ENCODE measurements at regions of chr21 and their contacts with region 1.

Region 1: GRCh38 chr21:29849735-29850176 is 90.0 kb downstream of the GRIK1 start:
- DNase-seq: peak; percentile 64
- ATAC-seq: peak; percentile 99
- H3K4me3 ChIP-seq: no peak overlapping the region
- H3K27ac ChIP-seq: no peak overlapping the region
- H3K4me1 ChIP-seq: no peaks in the 10 kb centered on the region
- H3K27me3 ChIP-seq: peaks cover 9% of the 10 kb centered on the region; the same call in 1 of the 2 replicates
- CTCF ChIP-seq: peak; percentile 88

Region 2: DNA sequence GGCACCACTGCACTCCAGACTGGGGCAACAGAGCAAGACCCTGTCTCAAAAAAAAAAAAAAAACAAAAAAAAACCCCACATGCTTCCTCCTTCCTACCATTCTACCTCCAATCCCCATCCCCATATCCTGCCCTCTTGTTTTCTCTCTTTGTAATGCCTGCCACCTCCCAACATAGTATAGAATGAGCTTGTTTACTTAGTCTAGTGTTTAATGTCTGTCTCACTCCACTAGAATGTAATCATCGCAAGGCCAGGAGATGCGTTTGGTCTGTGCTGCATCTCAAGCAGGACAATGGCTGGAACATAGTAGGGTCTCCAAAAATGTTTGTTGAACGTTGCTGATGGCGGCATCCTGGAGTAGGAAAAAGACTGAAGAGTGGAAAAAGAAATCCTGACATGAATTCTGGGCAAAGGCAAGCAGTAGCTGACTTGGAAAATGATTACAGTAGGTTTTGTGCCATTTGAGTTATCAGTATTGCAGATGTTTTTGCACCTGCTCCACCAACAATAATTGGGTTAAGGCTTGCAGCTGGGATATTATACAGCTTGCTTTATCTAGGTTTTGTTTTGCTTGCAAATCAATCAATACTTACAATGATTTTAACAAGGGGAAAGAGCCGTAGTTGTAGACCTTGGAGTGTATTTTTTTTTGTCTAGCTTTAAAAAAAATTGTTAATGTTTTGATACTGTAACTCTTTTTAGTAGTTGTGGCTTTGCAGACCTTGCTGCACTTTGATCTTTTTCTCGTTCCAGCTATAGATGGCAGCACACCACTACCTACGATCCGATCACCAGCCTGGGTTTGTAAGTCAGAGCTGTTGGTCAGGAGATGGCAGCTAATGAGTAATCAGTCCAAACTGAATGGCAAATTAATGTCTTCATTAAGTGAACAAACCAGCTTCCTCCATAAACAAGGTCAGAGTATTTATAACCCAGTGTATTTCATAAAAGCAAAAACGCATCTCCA is 488.7 kb before region 1 on chr21:
- CTCF ChIA-PET with region 1: no interaction called
- POLR2A ChIA-PET with region 1: no interaction called
- intact Hi-C with region 1: loop called (anchors 5 kb)
- DNase-seq: peak; percentile 43
- ATAC-seq: peak; percentile 81
- H3K4me3 ChIP-seq: no peak overlapping the region
- H3K27ac ChIP-seq: no peak overlapping the region
- H3K4me1 ChIP-seq: peaks cover 22% of the 10 kb centered on the region
- H3K27me3 ChIP-seq: no peaks in the 10 kb centered on the region
- CTCF ChIP-seq: peak; percentile 48

Region 3: DNA sequence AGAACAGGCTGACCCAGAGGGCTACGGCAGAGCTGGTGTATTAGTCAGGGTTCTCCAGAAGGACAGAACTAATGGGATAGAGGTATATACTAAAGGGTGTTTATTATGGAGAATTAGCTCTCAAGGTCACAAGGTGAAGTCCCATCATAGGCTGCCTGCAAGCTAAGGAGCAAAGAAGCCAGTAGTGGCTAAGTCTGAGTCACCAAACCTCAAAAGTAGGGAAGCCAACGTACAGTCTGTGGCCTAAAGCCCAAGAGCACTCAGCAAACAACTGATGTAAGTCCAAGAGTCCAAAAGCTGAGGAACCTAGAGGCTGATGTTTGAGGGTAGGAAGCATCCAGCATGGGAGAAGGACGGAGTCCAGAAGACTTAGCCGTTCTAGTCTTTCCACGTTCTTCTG is 371.8 kb before region 1 on chr21:
- CTCF ChIA-PET with region 1: no interaction called
- POLR2A ChIA-PET with region 1: no interaction called
- intact Hi-C with region 1: loop called (anchors 1 kb)
- DNase-seq: peak; percentile 29
- ATAC-seq: peak; percentile 42
- H3K4me3 ChIP-seq: no peak overlapping the region
- H3K27ac ChIP-seq: no peak overlapping the region
- H3K4me1 ChIP-seq: no peaks in the 10 kb centered on the region
- H3K27me3 ChIP-seq: no peaks in the 10 kb centered on the region
- CTCF ChIP-seq: no peak

Region 4: DNA sequence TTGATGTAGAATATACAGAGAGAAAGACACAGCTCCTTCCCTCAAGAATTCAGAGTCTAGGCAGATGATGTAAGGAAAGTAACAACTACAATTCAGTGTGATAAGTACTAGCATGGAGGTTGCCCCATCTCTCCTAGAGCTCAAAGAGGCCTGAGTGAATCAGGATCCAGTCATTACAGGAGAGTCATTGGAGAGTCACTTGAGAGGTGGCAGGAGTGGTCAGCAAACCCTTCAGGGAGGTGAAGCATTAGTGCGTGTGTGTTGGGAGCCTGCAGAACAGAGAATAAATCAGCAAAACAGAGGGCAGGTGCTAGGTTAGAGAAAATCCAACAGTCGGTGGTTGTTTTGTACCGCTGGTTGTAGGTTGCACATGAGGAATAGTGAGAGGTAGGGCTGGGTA is 43.9 kb after region 1 on chr21:
- CTCF ChIA-PET with region 1: no interaction called
- POLR2A ChIA-PET with region 1: no interaction called
- intact Hi-C with region 1: no loop called
- DNase-seq: peak; percentile 9
- ATAC-seq: no peak
- H3K4me3 ChIP-seq: no peak overlapping the region
- H3K27ac ChIP-seq: no peak overlapping the region
- H3K4me1 ChIP-seq: no peaks in the 10 kb centered on the region
- H3K27me3 ChIP-seq: peaks cover 22% of the 10 kb centered on the region
- CTCF ChIP-seq: no peak

Region 5: DNA sequence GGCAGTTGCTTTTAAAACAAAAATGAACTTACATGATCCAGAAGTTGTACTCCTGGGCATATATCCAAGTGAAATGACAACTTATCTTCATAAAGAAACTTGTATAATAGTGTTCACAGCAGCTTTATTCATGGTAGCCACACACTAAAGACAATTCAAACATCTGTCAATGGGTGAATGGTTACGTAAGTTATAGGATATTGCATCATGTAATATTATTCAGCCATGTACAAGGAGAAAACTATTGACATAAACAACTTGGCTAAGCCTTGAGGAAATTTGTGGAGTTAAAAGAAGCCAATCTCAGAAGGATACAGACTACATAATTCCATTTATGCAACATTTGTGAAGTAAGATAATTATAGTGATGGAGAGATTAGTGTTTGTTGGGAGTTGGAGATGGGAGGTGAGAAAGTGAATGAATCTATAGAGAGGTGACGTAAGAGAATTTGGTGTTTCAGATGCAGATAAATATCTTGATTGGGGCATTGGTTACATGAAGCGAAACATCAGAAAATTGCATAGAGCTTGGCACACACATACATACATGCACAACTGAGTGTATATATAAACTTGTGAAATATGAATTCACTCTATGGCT is 140.0 kb after region 1 on chr21:
- CTCF ChIA-PET with region 1: no interaction called
- POLR2A ChIA-PET with region 1: no interaction called
- intact Hi-C with region 1: no loop called
- DNase-seq: no peak
- ATAC-seq: no peak
- H3K4me3 ChIP-seq: no peak overlapping the region
- H3K27ac ChIP-seq: no peak overlapping the region
- H3K4me1 ChIP-seq: no peaks in the 10 kb centered on the region
- H3K27me3 ChIP-seq: peaks cover 16% of the 10 kb centered on the region; the same call in 1 of the 2 replicates
- CTCF ChIP-seq: no peak

Measured in PC-3 (cell line).